ENCODE measurements at regions of chrX and their contacts with region 1.

Region 1: DNA sequence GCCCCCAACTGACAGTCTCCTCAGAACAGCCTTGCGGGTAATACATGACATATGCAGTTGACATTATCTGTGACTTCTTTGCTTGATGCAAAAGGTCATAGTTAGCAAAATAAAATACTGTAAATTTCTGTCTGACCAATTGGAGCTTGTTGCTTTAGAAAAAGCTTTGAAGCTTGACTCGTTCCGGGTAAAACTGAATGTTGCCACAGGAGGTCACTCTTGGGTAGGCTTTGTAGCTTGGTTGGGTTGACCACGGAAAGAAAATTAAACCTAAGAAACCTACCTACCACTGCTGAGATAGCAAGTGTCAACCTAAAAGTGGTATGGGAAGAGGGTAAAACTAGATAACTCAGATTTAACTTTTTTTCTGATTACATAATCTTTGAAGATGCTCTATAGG is 23.2 kb downstream of the PRPS2 start:
- DNase-seq: peak; percentile 60
- H3K4me3 Mint-ChIP-seq: no peak overlapping the region
- H3K27ac Mint-ChIP-seq: no peak overlapping the region
- H3K4me1 Mint-ChIP-seq: no peaks in the 10 kb centered on the region
- H3K27me3 Mint-ChIP-seq: no peaks in the 10 kb centered on the region
- CTCF ChIP-seq: peak; percentile 27

Region 2: DNA sequence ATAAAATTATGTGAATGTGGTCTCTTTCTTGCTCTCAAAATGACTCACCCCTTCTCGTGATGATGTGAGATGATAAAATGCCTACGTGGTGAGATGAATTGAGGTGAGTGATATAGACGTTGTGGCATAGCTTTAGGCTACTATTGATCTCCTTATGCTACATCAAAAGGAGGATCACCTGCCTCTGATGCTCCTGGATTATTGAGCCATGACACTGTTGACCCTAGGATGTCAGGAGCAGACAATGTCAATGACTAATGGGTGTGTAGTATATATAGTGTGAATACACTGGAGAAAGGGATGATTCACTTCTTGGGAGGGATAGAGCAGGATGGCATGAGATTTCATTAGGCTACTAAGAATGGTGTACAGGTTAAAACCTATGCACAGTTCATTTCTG is 233.9 kb before region 1 on chrX:
- CTCF ChIA-PET with region 1: no interaction called
- intact Hi-C with region 1: no loop called
- DNase-seq: no peak
- H3K4me3 Mint-ChIP-seq: no peak overlapping the region
- H3K27ac Mint-ChIP-seq: no peak overlapping the region
- H3K4me1 Mint-ChIP-seq: no peaks in the 10 kb centered on the region
- H3K27me3 Mint-ChIP-seq: peaks cover 14% of the 10 kb centered on the region
- CTCF ChIP-seq: no peak

Region 3: GRCh38 chrX:12894074-12895030 is 79.9 kb after region 1 on chrX:
- CTCF ChIA-PET with region 1: interaction called, 3 read pairs
- intact Hi-C with region 1: loop called (anchors 1 kb)
- DNase-seq: peak; percentile 40
- H3K4me3 Mint-ChIP-seq: no peak overlapping the region
- H3K27ac Mint-ChIP-seq: no peak overlapping the region
- H3K4me1 Mint-ChIP-seq: peaks cover 8% of the 10 kb centered on the region
- H3K27me3 Mint-ChIP-seq: no peaks in the 10 kb centered on the region
- CTCF ChIP-seq: peak; percentile 76

Region 4: GRCh38 chrX:12901486-12901885 is 87.1 kb after region 1 on chrX:
- CTCF ChIA-PET with region 1: interaction called, 7 read pairs
- intact Hi-C with region 1: loop called (anchors 1 kb)
- DNase-seq: peak; percentile 76
- H3K4me3 Mint-ChIP-seq: no peak overlapping the region
- H3K27ac Mint-ChIP-seq: no peak overlapping the region
- H3K4me1 Mint-ChIP-seq: peaks cover 8% of the 10 kb centered on the region
- H3K27me3 Mint-ChIP-seq: no peaks in the 10 kb centered on the region
- CTCF ChIP-seq: peak; percentile 27

Measured in Calu3 (cell line).